Activated CD4-positive, alpha-beta memory T cell treated with anti-CD3 and anti-CD28 coated beads, Interleukin-2, amount 10 ng/mL, durations not matched to agents 7 days and 5 days (primary cell): ENCODE measurements at regions of chr15 and their contacts with region 1.

Region 1: GRCh38 chr15:76150971-76151598 is 91.3 kb downstream of the TMEM266 start:
- DNase-seq: peak; percentile 77
- H3K4me3 Mint-ChIP-seq: no peak overlapping the region
- H3K27ac Mint-ChIP-seq: no peak overlapping the region
- H3K4me1 Mint-ChIP-seq: peaks cover 15% of the 10 kb centered on the region
- H3K27me3 Mint-ChIP-seq: peaks cover 16% of the 10 kb centered on the region

Region 2: GRCh38 chr15:75809986-75810750 is 340.9 kb before region 1 on chr15:
- CTCF ChIA-PET with region 1: interaction called, 13 read pairs
- POLR2A ChIA-PET with region 1: no interaction called
- DNase-seq: peak; percentile 32
- H3K4me3 Mint-ChIP-seq: no peak overlapping the region
- H3K27ac Mint-ChIP-seq: no peak overlapping the region
- H3K4me1 Mint-ChIP-seq: no peaks in the 10 kb centered on the region
- H3K27me3 Mint-ChIP-seq: peaks cover 11% of the 10 kb centered on the region

Region 3: DNA sequence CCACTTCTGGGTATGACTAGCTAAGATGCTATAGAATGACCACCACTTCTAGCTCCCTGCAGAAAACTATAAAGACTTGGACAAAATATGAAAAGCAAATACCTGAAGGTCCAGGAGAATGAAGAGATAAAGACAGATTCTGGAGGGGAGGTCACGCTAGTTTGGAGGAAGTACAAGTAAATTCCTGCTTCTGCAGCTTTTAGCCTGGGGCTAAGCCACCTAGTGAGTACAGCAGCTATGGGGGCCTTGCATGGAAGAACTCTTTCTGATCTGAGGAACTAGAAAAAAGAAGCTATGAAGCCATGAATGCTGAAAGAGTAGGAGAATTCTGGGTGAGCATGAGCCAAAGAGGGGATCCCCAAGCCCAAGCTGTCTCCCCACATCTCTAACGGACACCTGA is 168.6 kb before region 1 on chr15:
- CTCF ChIA-PET with region 1: no interaction called
- POLR2A ChIA-PET with region 1: no interaction called
- DNase-seq: no peak
- H3K4me3 Mint-ChIP-seq: no peak overlapping the region
- H3K27ac Mint-ChIP-seq: no peak overlapping the region
- H3K4me1 Mint-ChIP-seq: no peaks in the 10 kb centered on the region
- H3K27me3 Mint-ChIP-seq: peaks cover 34% of the 10 kb centered on the region

Region 4: DNA sequence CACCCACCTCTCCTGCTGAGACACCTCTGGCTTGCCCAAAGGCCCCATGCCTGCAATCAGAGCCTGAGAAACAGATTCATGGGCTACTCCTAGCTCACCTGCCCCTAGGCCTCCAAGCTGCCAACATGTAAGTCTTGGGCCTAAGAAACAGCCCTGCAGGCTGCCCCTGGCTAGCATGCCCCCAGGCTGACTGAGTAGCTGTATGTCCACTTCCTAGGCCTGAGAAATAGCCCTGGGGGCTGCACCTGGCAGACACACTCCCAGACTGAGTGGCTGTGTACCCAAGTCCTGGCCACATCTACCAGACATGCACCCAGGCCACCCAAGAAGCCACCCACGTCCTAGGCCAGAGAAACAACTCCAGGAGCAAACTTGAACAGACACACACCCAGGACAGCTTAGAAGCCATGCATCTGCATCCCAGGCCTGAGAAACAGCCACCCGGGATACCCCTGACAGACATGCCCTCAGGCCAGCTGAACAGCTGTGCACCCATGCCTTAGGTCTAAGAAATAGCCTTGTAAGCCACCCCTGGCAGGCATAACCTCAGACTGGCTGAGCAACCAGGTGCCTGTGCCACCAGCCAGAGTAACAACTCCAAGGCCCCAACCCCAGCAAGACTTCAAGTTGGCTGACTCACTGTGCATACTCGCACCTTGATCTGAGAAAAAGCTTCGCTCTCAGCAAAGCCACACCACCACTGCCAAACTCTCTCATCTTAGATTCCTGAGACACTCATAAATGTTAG is 126.9 kb before region 1 on chr15:
- CTCF ChIA-PET with region 1: no interaction called
- POLR2A ChIA-PET with region 1: no interaction called
- DNase-seq: no peak
- H3K4me3 Mint-ChIP-seq: no peak overlapping the region
- H3K27ac Mint-ChIP-seq: no peak overlapping the region
- H3K4me1 Mint-ChIP-seq: no peaks in the 10 kb centered on the region
- H3K27me3 Mint-ChIP-seq: peaks cover 8% of the 10 kb centered on the region

Region 5: DNA sequence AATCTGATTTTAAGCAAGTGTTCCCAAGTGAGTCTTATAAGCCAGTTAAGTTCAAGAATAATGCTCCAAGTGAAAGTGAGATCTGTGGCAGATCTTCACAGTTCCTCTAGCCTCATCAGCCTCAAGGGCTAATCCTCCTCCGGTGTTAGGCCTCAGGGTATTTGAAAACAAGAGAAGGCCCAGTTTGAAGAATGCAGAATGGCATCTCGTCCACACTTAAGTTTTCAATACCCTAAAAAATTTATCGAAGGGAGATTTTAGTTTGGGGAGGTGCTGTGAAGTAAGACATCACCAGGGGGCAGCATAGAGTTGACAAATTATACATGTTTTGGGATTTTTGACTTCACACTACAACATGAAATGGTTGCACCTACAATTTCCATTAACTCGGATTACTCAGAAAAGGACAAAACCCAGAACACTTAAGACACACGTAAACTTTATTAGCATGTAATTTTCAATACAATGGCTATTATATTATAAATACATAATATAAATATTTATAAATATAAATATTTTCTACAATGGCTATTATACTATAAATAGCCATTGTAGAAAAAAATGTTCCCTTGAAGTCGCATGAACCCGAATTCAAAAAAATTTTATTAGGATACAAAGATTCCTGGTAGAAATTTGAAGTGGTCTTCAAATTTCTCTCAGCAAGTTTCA is 93.6 kb before region 1 on chr15:
- CTCF ChIA-PET with region 1: interaction called, 32 read pairs
- POLR2A ChIA-PET with region 1: no interaction called
- DNase-seq: peak; percentile 42
- H3K4me3 Mint-ChIP-seq: no peak overlapping the region
- H3K27ac Mint-ChIP-seq: no peak overlapping the region
- H3K4me1 Mint-ChIP-seq: peaks cover 32% of the 10 kb centered on the region
- H3K27me3 Mint-ChIP-seq: peaks cover 68% of the 10 kb centered on the region

Region 6: GRCh38 chr15:76169802-76170800 is 19.0 kb after region 1 on chr15:
- CTCF ChIA-PET with region 1: no interaction called
- POLR2A ChIA-PET with region 1: no interaction called
- DNase-seq: no peak
- H3K4me3 Mint-ChIP-seq: no peak overlapping the region
- H3K27ac Mint-ChIP-seq: no peak overlapping the region
- H3K4me1 Mint-ChIP-seq: no peaks in the 10 kb centered on the region
- H3K27me3 Mint-ChIP-seq: peaks cover 12% of the 10 kb centered on the region